ENCODE measurements at regions of chr14 and their contacts with region 1.

Region 1: GRCh38 chr14:73231981-73232851 is 5.1 kb upstream of the PAPLN start:
- DNase-seq: peak; percentile 69
- ATAC-seq: peak; percentile 91
- H3K4me3 ChIP-seq: peak overlapping the region in 2 of 3 experiments; percentile 16 to 62; a peak in 4 of 6 replicates
- H3K27ac ChIP-seq: no peak overlapping the region
- H3K4me1 ChIP-seq: peaks cover 44% of the 10 kb centered on the region
- H3K27me3 ChIP-seq: peaks cover 9 to 44% of the 10 kb centered on the region in 2 experiments; a peak in 4 of 5 replicates
- CTCF ChIP-seq: peak; percentile 93
- EP300 ChIP-seq: no peak
- POLR2A ChIP-seq: no peak
- RAD21 ChIP-seq: peak; percentile 89

Region 2: DNA sequence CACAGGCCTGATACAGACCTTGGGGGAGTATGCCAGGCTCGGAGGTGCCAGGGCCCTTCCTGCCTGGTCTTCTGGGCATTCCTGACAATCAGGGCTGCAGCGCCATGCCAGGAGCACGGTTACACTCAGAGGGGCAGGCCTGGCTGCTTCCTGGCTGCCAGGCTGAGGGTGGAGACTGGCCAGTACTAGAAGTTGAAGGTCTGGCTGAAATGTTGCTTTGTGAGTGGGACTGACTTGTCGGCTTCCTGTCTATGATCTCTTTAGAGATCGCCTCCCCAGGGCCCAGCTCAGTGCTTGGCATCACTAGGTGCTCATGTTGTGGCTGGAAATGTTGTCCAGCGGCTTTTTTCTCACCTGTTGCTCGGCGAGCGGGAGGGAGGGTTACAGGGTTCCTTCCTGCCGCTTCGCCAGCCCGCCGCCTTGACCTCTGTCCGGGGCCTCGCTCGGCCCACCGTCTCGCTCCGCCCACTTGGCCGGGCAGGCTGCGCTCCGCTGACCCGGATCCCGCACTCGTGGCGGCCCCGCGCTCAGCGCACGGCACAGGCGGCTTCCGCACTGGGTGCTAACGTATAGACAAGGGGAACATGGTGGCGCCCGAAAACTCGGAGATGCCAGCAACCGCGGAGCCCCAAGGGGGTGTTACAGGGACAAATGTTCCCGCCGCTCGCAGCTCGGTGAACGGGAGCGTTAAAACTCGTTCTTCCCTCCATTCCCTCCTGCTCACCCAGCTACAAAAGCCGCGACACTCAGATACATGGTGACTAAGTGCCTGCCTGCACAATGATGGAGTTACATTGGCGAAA is 37.7 kb after region 1 on chr14:
- CTCF ChIA-PET with region 1: no interaction called
- POLR2A ChIA-PET with region 1: no interaction called
- in situ Hi-C with region 1: loop called (anchors 5 kb)
- intact Hi-C with region 1: no loop called
- DNase-seq: no peak
- ATAC-seq: peak; percentile 51
- H3K4me3 ChIP-seq: peak overlapping the region; percentile 27 to 60 (median 30)
- H3K27ac ChIP-seq: no peak overlapping the region
- H3K4me1 ChIP-seq: peaks cover 16% of the 10 kb centered on the region
- H3K27me3 ChIP-seq: peaks cover 0 to 3% of the 10 kb centered on the region in 2 experiments; a peak in 1 of 5 replicates
- CTCF ChIP-seq: no peak
- EP300 ChIP-seq: no peak
- POLR2A ChIP-seq: no peak
- RAD21 ChIP-seq: no peak

Region 3: GRCh38 chr14:73283608-73284379 is 51.6 kb after region 1 on chr14:
- CTCF ChIA-PET with region 1: no interaction called
- POLR2A ChIA-PET with region 1: no interaction called
- in situ Hi-C with region 1: no loop called
- intact Hi-C with region 1: loop called (anchors 10 kb)
- DNase-seq: no peak
- ATAC-seq: no peak
- H3K4me3 ChIP-seq: no peak overlapping the region
- H3K27ac ChIP-seq: no peak overlapping the region
- H3K4me1 ChIP-seq: peaks cover 12% of the 10 kb centered on the region
- H3K27me3 ChIP-seq: no peaks in the 10 kb centered on the region
- CTCF ChIP-seq: peak; percentile 41
- EP300 ChIP-seq: no peak
- POLR2A ChIP-seq: no peak
- RAD21 ChIP-seq: no peak

Region 4: GRCh38 chr14:73472185-73473114 is 240.2 kb after region 1 on chr14:
- CTCF ChIA-PET with region 1: interaction called, 10 read pairs
- POLR2A ChIA-PET with region 1: interaction called, 7 read pairs
- in situ Hi-C with region 1: loop called (anchors 5 kb)
- intact Hi-C with region 1: loop called (anchors 2 kb)
- DNase-seq: peak; percentile 64
- ATAC-seq: peak; percentile 81
- H3K4me3 ChIP-seq: no peak overlapping the region
- H3K27ac ChIP-seq: no peak overlapping the region
- H3K4me1 ChIP-seq: peaks cover 19% of the 10 kb centered on the region
- H3K27me3 ChIP-seq: no peaks in the 10 kb centered on the region
- CTCF ChIP-seq: peak; percentile 80
- EP300 ChIP-seq: no peak
- POLR2A ChIP-seq: no peak
- RAD21 ChIP-seq: peak; percentile 86